CD4-positive, alpha-beta memory T cell (primary cell): ENCODE measurements at regions of chr10 and their contacts with region 1.

Region 1: DNA sequence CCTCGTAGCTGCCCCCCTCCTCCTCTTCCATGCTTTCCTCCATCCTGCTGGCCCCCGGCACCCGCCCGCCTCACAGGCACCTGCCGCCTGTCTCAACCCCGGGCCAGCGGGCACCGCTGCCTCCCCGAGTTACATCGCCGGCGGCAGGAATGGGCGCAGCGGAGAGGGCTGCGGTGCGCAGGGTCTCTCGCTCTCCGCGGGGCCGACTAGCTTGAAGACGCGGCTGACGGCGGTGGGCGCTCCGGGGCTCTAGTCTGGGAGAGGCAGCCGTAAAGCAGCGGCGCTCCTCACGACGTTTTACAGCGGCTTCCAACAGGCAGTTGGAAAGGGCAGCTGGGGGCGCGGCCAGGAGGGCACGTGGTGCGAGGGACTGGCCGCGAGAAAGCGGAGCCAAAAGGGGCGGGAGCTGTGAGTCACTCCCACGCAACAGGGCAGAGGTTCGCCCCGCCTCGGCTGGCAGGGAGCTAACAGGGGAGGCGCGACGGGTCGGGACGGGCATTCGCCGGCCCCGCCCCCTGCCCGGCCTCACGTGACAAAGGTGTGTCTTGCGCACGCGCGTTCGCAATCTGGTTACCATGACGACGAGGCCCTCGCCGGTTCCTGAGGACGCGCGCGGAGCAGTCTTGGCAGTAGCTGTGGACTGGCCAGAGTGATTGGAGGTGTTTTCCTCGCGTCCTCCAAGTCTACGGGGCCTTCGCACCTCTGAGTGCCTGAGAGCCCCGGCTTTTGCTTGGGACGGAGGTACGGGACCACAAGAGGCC is at the start of gene CACUL1:
- DNase-seq: peak; percentile 100
- H3K4me3 ChIP-seq: peak within 1 kb of the TSS; percentile 64 to 74
- H3K4me3 Mint-ChIP-seq: peak within 1 kb of the TSS; percentile 92 to 96 (median 94)
- H3K27ac ChIP-seq: peak within 1 kb of the TSS; percentile 87
- H3K27ac Mint-ChIP-seq: peak within 1 kb of the TSS; percentile 90 to 97 (median 96)
- H3K4me1 ChIP-seq: peaks cover 43% of the 10 kb centered on the region
- H3K4me1 Mint-ChIP-seq: peaks cover 22 to 49% (median 34%) of the 10 kb centered on the region in 4 donors
- H3K27me3 ChIP-seq: no peaks in the 10 kb centered on the region
- H3K27me3 Mint-ChIP-seq: peaks cover 0 to 9% of the 10 kb centered on the region in 2 donors
- total RNA-seq, gene CACUL1: 32.1 to 32.3 TPM

Region 2: DNA sequence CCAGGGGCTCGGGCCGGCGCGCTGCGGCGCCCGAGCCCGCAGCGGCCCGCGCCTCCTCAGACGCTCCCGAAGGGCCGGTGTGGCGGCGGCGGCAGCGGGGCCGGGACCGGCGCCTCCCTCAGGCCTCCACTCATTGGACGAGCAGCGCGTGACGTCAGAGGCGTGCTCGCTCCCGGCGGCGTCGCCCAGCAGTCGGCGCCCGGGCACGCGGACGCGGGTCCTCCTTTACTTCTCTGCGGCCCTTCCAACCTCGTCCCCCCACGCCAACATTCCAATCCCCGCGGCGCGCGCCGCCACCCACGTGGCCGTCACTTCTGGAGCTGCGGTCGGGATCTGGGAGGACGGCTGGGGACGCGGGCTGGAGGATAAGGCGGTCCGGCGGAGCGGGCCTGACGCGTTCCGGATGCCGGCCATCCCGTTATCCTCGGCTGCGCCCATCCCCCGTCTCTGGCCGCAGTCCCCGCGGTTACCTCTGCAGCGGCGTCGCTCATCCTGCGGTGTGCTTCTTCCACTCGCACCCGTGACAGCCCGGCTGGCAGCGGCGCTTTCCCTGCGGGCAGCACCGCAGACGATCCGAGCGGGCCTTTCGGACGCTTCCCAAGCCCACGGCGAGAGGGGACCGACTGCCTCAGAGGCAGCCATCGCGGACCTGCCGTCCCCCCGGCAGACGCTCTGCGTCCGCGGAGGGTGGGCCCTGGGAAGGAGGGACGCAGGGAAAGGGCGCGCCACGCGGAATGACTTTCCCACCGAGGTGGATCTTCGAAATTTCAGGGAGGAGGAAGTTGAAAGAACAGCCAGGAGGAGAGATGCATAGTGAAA is 1379.3 kb before region 1 on chr10 and contains the start of gene PDZD8:
- CTCF ChIA-PET with region 1: no interaction called
- POLR2A ChIA-PET with region 1: no interaction called
- intact Hi-C with region 1: loop called (anchors 10 kb)
- DNase-seq: peak; percentile 86 to 90 (median 88)
- H3K4me3 ChIP-seq: peak within 1 kb of the TSS; percentile 64 to 98
- H3K4me3 Mint-ChIP-seq: peak within 1 kb of the TSS; percentile 95 to 97 (median 96)
- H3K27ac ChIP-seq: peak within 1 kb of the TSS; percentile 61
- H3K27ac Mint-ChIP-seq: peak within 1 kb of the TSS; percentile 92 to 98 (median 94)
- H3K4me1 ChIP-seq: peaks cover 29% of the 10 kb centered on the region
- H3K4me1 Mint-ChIP-seq: peaks cover 19 to 44% (median 33%) of the 10 kb centered on the region in 4 donors
- H3K27me3 ChIP-seq: peaks cover 3% of the 10 kb centered on the region
- H3K27me3 Mint-ChIP-seq: peaks cover 6 to 19% of the 10 kb centered on the region in 2 donors
- total RNA-seq, gene PDZD8: 13.9 to 15.0 TPM

Region 3: DNA sequence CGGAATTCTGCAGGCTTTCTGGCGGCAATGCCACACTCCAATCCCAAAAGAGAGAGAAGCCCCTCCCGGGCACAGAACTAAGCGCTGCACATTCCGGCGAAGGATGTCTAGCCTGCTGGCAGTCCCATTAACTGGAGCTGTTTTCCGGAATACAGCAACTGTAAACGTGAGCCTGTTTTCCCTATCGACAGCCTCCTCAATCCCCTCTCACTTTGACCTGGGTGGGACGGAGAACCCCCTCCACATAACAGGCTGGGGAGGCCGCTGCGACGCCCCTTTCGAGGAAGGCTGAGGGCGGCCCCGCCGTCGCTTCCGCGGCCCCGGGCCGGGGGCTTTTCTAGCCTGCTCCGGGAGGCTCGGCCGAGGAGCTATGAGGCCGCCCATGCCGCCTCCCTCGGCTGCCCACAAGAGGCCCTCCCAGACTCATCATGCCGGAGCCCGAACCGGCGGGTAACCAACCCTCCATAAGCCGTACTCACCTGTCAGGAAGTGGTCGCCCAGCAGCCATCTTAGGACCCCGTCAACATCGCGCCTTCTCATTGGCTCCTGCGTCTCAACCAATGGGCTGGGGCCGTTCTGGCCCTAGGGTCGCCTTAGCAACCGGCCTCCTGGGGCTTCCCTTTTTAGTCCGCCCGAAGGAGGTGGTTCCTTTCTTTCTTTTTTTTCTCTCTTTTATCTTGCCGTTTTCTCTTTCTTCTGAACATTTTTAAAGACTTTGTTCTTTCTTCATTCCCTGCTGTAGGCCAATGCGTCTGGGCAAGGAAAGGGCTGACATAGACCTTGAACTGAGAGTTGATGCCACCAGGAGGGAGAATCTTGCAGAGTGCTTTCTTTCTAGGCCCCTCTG is 412.9 kb before region 1 on chr10 and contains the start of gene FAM204A:
- CTCF ChIA-PET with region 1: no interaction called
- POLR2A ChIA-PET with region 1: no interaction called
- intact Hi-C with region 1: loop called (anchors 1 kb)
- DNase-seq: peak; percentile 96 to 99 (median 97)
- H3K4me3 ChIP-seq: peak within 1 kb of the TSS; percentile 88 to 96
- H3K4me3 Mint-ChIP-seq: peak within 1 kb of the TSS; percentile 93 to 100 (median 95)
- H3K27ac ChIP-seq: peak within 1 kb of the TSS; percentile 78
- H3K27ac Mint-ChIP-seq: peak within 1 kb of the TSS; percentile 93 to 99 (median 97)
- H3K4me1 ChIP-seq: peaks cover 46% of the 10 kb centered on the region
- H3K4me1 Mint-ChIP-seq: peaks cover 35 to 64% (median 49%) of the 10 kb centered on the region in 4 donors
- H3K27me3 ChIP-seq: no peaks in the 10 kb centered on the region
- H3K27me3 Mint-ChIP-seq: peaks cover 0 to 2% of the 10 kb centered on the region in 2 donors
- total RNA-seq, gene FAM204A: 64.3 to 65.9 TPM

Region 4: DNA sequence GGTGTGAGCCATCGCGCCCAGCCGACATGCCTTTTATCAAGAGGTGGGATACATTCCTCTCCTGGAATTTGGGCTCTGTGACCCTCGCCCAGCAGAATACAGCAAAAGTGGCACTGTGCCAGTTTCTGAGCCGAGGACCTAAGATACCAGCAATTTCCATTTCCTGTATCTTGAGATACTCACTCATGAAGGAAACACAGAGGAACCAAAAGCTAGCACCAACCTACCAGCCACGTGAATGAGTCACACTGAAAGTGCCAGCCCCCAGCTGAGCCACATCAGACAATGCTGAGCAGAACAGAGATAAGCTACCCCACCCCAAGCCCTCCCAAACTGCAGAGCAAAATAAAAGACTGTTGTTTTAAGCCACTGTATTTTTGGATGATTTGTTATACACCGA is 56.5 kb before region 1 on chr10:
- CTCF ChIA-PET with region 1: no interaction called
- POLR2A ChIA-PET with region 1: interaction called, 23 read pairs
- intact Hi-C with region 1: loop called (anchors 1 kb)
- DNase-seq: peak; percentile 79 to 94 (median 83)
- H3K4me3 ChIP-seq: peak overlapping the region in 1 of 2 donors; percentile 32
- H3K4me3 Mint-ChIP-seq: peak overlapping the region; percentile 69 to 86 (median 78)
- H3K27ac ChIP-seq: peak overlapping the region; percentile 20
- H3K27ac Mint-ChIP-seq: peak overlapping the region; percentile 59 to 91 (median 83)
- H3K4me1 ChIP-seq: peaks cover 24% of the 10 kb centered on the region
- H3K4me1 Mint-ChIP-seq: peaks cover 16 to 50% (median 38%) of the 10 kb centered on the region in 4 donors
- H3K27me3 ChIP-seq: no peaks in the 10 kb centered on the region
- H3K27me3 Mint-ChIP-seq: no peaks in the 10 kb centered on the region

Region 5: GRCh38 chr10:119028900-119029612 is 274.2 kb after region 1 on chr10:
- CTCF ChIA-PET with region 1: no interaction called
- POLR2A ChIA-PET with region 1: interaction called, 4 read pairs
- intact Hi-C with region 1: loop called (anchors 2 kb)
- DNase-seq: peak; percentile 69 to 84 (median 73)
- H3K4me3 ChIP-seq: peak overlapping the region in 1 of 2 donors; percentile 28
- H3K4me3 Mint-ChIP-seq: peak overlapping the region; percentile 78 to 85 (median 80)
- H3K27ac ChIP-seq: no peak overlapping the region
- H3K27ac Mint-ChIP-seq: peak overlapping the region in 3 of 7 donors; percentile 64 to 73 (median 72)
- H3K4me1 ChIP-seq: peaks cover 7% of the 10 kb centered on the region
- H3K4me1 Mint-ChIP-seq: peaks cover 6 to 30% (median 15%) of the 10 kb centered on the region in 4 donors
- H3K27me3 ChIP-seq: no peaks in the 10 kb centered on the region
- H3K27me3 Mint-ChIP-seq: no peaks in the 10 kb centered on the region